Posterior vena cava (tissue), 2 donors: ENCODE measurements at regions of chr13 and their contacts with region 1.

Region 1: GRCh38 chr13:51590971-51591627 is 6.8 kb downstream of the WDFY2 start:
- DNase-seq: no peak

Region 2: GRCh38 chr13:51740698-51741097 is 149.6 kb after region 1 on chr13:
- intact Hi-C with region 1: loop called in 1 of 2 experiments (anchors 10 kb)
- DNase-seq: no peak